Activated B cell treated with CpG ODN at 0.5 μM for 24 hours (primary cell): ENCODE measurements at regions of chr4 and their contacts with region 1.

Region 1: GRCh38 chr4:101977076-101977475 is 186.5 kb downstream of the BANK1 start:
- DNase-seq: no peak
- ATAC-seq: no peak
- H3K4me3 Mint-ChIP-seq: no peak overlapping the region
- H3K27ac Mint-ChIP-seq: peak overlapping the region; percentile 57
- H3K4me1 Mint-ChIP-seq: peaks cover 66% of the 10 kb centered on the region
- H3K27me3 Mint-ChIP-seq: no peaks in the 10 kb centered on the region
- CTCF ChIP-seq: no peak

Region 2: GRCh38 chr4:101987623-101988243 is 10.7 kb after region 1 on chr4:
- CTCF ChIA-PET with region 1: interaction called, 4 read pairs
- POLR2A ChIA-PET with region 1: interaction called, 4 read pairs
- intact Hi-C with region 1: loop called (anchors 1 kb)
- DNase-seq: no peak
- ATAC-seq: peak; percentile 72
- H3K4me3 Mint-ChIP-seq: peak overlapping the region; percentile 64
- H3K27ac Mint-ChIP-seq: peak overlapping the region; percentile 93
- H3K4me1 Mint-ChIP-seq: peaks cover 81% of the 10 kb centered on the region
- H3K27me3 Mint-ChIP-seq: no peaks in the 10 kb centered on the region
- CTCF ChIP-seq: no peak

Region 3: GRCh38 chr4:102031406-102031805 is 54.3 kb after region 1 on chr4:
- CTCF ChIA-PET with region 1: no interaction called
- POLR2A ChIA-PET with region 1: no interaction called
- intact Hi-C with region 1: no loop called
- DNase-seq: no peak
- ATAC-seq: no peak
- H3K4me3 Mint-ChIP-seq: no peak overlapping the region
- H3K27ac Mint-ChIP-seq: peak overlapping the region; percentile 46
- H3K4me1 Mint-ChIP-seq: peaks cover 8% of the 10 kb centered on the region
- H3K27me3 Mint-ChIP-seq: no peaks in the 10 kb centered on the region
- CTCF ChIP-seq: no peak